SK-N-SH (cell line): ENCODE measurements at regions of chr16 and their contacts with region 1.

Region 1: DNA sequence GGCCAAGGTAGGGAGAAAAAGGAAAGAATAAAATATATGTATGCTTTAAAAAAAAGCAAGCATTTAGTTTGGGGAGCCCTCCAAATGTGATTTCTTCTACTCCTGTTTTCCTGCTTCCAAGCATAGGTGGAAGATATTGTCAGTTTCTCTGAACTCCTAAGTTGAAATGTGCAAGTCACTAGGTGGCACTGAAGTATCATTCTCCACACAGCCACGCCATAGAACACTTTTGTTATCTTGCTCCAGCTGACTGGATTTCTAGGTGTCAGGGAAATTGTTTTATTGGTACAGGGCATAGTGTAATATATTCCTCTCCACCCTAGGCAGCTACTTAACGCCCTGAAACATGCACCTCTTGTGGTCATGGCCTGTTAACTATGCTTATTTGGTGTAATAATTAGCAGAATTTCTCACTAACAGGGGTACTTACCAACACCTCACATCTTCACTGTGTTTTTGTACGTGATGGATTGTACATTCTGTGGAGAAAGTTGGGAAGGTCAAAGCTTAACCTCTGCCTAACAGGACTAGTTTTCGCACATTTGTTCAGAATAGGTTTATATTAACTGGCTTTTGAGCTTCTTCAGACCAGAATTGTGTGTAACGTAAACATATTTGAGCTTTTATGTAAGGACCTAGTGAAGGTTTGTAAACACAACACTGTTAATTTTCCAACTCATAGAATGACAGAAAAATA is 69.3 kb downstream of the FTO start:
- DNase-seq: peak; percentile 52
- H3K4me3 ChIP-seq: no peak overlapping the region
- H3K27ac ChIP-seq: peak overlapping the region in 1 of 2 experiments; percentile 22; a peak in 1 of 4 replicates
- H3K4me1 ChIP-seq: peaks cover 12 to 51% of the 10 kb centered on the region in 2 experiments
- H3K27me3 ChIP-seq: no peaks in the 10 kb centered on the region
- CTCF ChIP-seq: peak; percentile 82
- EP300 ChIP-seq: no peak
- RAD21 ChIP-seq: peak; percentile 91

Region 2: DNA sequence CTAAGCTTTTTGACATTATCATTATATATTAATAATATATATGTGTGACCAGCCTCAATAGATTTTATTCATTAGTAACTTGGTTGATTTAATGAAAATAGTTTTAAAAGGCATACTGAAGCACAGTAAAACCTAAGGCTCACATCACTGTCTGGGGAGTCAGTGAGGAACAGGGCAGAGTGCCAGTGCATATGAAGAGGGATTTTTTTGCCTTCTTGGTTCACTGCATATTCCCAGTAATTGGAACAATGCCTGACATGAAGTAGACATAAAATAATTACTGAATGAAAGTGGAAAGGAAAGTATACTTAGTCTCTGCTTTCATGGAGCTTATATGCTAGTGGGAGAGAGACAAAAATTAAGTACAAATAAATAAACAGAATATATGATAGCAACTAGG is 11.7 kb after region 1 on chr16:
- CTCF ChIA-PET with region 1: interaction called, 19 read pairs
- POLR2A ChIA-PET with region 1: no interaction called
- DNase-seq: no peak
- H3K4me3 ChIP-seq: no peak overlapping the region
- H3K27ac ChIP-seq: no peak overlapping the region
- H3K4me1 ChIP-seq: peaks cover 0 to 19% of the 10 kb centered on the region in 2 experiments; a peak in 3 of 4 replicates
- H3K27me3 ChIP-seq: no peaks in the 10 kb centered on the region
- CTCF ChIP-seq: no peak
- EP300 ChIP-seq: no peak
- RAD21 ChIP-seq: no peak

Region 3: DNA sequence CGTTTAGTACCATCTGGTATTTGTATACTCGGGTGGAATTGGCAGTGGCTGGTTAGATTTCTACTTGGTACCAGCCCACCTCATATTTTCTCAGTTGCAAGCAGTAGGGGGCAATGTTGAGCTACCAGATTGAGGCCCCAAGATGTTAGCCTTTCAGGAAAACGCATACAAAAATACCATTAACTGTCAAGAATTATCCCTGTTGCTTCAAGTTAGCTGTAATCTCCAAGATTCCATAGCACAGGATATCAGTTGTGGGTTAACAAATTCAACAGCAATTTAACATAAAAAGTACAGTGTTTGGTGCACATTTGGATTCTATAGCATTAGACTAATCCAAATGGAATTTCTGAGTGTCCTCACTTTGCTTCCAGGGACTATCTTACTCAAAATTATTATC is 118.9 kb after region 1 on chr16:
- CTCF ChIA-PET with region 1: interaction called, 13 read pairs
- POLR2A ChIA-PET with region 1: no interaction called
- DNase-seq: peak; percentile 40
- H3K4me3 ChIP-seq: no peak overlapping the region
- H3K27ac ChIP-seq: peak overlapping the region in 1 of 2 experiments; percentile 27; a peak in 3 of 4 replicates
- H3K4me1 ChIP-seq: peaks cover 8 to 29% of the 10 kb centered on the region in 2 experiments; a peak in 3 of 4 replicates
- H3K27me3 ChIP-seq: no peaks in the 10 kb centered on the region
- CTCF ChIP-seq: peak; percentile 91
- EP300 ChIP-seq: no peak
- RAD21 ChIP-seq: peak; percentile 88